ENCODE measurements at regions of chr5 and their contacts with region 1.

Region 1: GRCh38 chr5:61089351-61089750 is 72.9 kb downstream of the SMIM15 start:
- DNase-seq: peak; percentile 2
- ATAC-seq: peak; percentile 31; the same call in 1 of the 2 replicates
- H3K4me3 ChIP-seq: no peak overlapping the region
- H3K27ac ChIP-seq: no peak overlapping the region
- H3K4me1 ChIP-seq: 0 out of 2 replicates have a peak, but pooled peaks cover 3% of the 10 kb centered on the region
- H3K27me3 ChIP-seq: no peaks in the 10 kb centered on the region
- CTCF ChIP-seq: no peak

Region 2: GRCh38 chr5:61120534-61120933 is 31.2 kb after region 1 on chr5:
- CTCF ChIA-PET with region 1: no interaction called
- POLR2A ChIA-PET with region 1: no interaction called
- intact Hi-C with region 1: loop called (anchors 5 kb)
- DNase-seq: peak; percentile 34
- ATAC-seq: peak; percentile 58
- H3K4me3 ChIP-seq: no peak overlapping the region
- H3K27ac ChIP-seq: no peak overlapping the region
- H3K4me1 ChIP-seq: peaks cover 5% of the 10 kb centered on the region; the same call in 1 of the 2 replicates
- H3K27me3 ChIP-seq: no peaks in the 10 kb centered on the region
- CTCF ChIP-seq: no peak

Measured in PC-3 (cell line).